ENCODE measurements at regions of chr2 and their contacts with region 1.

Region 1: DNA sequence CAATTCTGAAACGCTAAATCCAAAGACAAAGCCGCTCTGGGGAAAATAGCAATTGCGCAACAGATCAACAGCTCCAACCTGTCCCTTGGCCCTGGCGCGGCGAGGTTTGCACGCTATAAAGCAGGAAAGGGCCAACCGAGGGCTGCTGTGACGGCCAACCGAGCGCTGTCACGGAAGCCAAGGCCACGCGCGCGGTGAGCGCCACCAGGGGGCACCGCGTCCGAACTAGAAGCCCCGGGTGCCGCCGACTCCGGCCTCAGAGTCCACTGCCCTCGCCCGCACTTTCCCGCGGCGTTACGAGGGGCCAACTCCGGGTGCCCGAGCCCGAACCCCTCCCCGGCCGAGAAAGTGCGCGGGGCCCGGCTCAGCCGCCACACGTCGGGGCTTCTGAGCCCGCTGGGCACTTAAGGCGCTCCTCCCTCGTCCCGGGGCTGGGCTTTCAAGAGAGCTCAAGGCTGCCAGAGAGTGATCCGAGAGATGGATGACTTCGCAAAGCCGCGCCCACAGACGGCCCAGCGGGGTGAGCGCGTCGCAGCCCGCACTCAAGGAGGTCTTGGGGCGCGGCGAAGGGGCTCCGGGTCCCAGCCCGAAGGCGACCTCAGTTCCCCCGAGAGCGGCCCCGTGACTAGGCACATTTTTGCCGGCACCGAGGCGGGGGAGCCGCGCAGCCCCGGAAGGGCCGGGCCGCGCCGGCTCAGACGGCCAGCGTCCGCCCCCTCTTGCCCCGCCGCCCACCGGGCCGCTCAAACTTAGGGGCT is 897 bp downstream of the NFE2L2 start:
- DNase-seq: peak; percentile 98
- ATAC-seq: peak; percentile 48
- H3K4me3 ChIP-seq: peak overlapping the region; percentile 67 to 97 (median 92)
- H3K4me3 Mint-ChIP-seq: peak overlapping the region; percentile 98
- H3K27ac ChIP-seq: peak overlapping the region; percentile 99 to 100
- H3K27ac Mint-ChIP-seq: peak overlapping the region; percentile 98
- H3K4me1 ChIP-seq: peaks cover 34% of the 10 kb centered on the region in 2 donors
- H3K4me1 Mint-ChIP-seq: peaks cover 50% of the 10 kb centered on the region
- H3K27me3 ChIP-seq: no peaks in the 10 kb centered on the region
- H3K27me3 Mint-ChIP-seq: no peaks in the 10 kb centered on the region
- CTCF ChIP-seq: peak; percentile 88

Region 2: GRCh38 chr2:176852667-176853066 is 411.0 kb before region 1 on chr2:
- CTCF ChIA-PET with region 1: no interaction called
- POLR2A ChIA-PET with region 1: no interaction called
- intact Hi-C with region 1: no loop called
- DNase-seq: no peak
- ATAC-seq: no peak
- H3K4me3 ChIP-seq: no peak overlapping the region
- H3K4me3 Mint-ChIP-seq: no peak overlapping the region
- H3K27ac ChIP-seq: no peak overlapping the region
- H3K27ac Mint-ChIP-seq: no peak overlapping the region
- H3K4me1 ChIP-seq: no peaks in the 10 kb centered on the region
- H3K4me1 Mint-ChIP-seq: no peaks in the 10 kb centered on the region
- H3K27me3 ChIP-seq: peaks cover 0 to 2% (median 0%) of the 10 kb centered on the region in 4 experiments
- H3K27me3 Mint-ChIP-seq: peaks cover 5% of the 10 kb centered on the region
- CTCF ChIP-seq: no peak

Region 3: GRCh38 chr2:177148477-177149154 is 115.0 kb before region 1 on chr2:
- CTCF ChIA-PET with region 1: interaction called, 29 read pairs
- POLR2A ChIA-PET with region 1: no interaction called
- intact Hi-C with region 1: no loop called
- DNase-seq: peak; percentile 85
- ATAC-seq: peak; percentile 92
- H3K4me3 ChIP-seq: peak overlapping the region; percentile 42 to 94 (median 67)
- H3K4me3 Mint-ChIP-seq: peak overlapping the region; percentile 92
- H3K27ac ChIP-seq: no peak overlapping the region
- H3K27ac Mint-ChIP-seq: peak overlapping the region; percentile 2
- H3K4me1 ChIP-seq: peaks cover 9 to 13% of the 10 kb centered on the region in 2 donors
- H3K4me1 Mint-ChIP-seq: peaks cover 11% of the 10 kb centered on the region
- H3K27me3 ChIP-seq: peaks cover 0 to 13% (median 10%) of the 10 kb centered on the region in 4 experiments
- H3K27me3 Mint-ChIP-seq: peaks cover 36% of the 10 kb centered on the region
- CTCF ChIP-seq: peak; percentile 99

Region 4: GRCh38 chr2:177239932-177240630 is 23.5 kb before region 1 on chr2:
- CTCF ChIA-PET with region 1: interaction called, 46 read pairs
- POLR2A ChIA-PET with region 1: interaction called, 17 read pairs
- intact Hi-C with region 1: loop called (anchors 1 kb)
- DNase-seq: peak; percentile 88
- ATAC-seq: peak; percentile 82
- H3K4me3 ChIP-seq: peak overlapping the region in 1 of 5 experiments; percentile 12
- H3K4me3 Mint-ChIP-seq: peak overlapping the region; percentile 72
- H3K27ac ChIP-seq: peak overlapping the region; percentile 59 to 60
- H3K27ac Mint-ChIP-seq: peak overlapping the region; percentile 82
- H3K4me1 ChIP-seq: peaks cover 48 to 50% of the 10 kb centered on the region in 2 donors
- H3K4me1 Mint-ChIP-seq: peaks cover 71% of the 10 kb centered on the region
- H3K27me3 ChIP-seq: no peaks in the 10 kb centered on the region
- H3K27me3 Mint-ChIP-seq: no peaks in the 10 kb centered on the region
- CTCF ChIP-seq: no peak

Region 5: DNA sequence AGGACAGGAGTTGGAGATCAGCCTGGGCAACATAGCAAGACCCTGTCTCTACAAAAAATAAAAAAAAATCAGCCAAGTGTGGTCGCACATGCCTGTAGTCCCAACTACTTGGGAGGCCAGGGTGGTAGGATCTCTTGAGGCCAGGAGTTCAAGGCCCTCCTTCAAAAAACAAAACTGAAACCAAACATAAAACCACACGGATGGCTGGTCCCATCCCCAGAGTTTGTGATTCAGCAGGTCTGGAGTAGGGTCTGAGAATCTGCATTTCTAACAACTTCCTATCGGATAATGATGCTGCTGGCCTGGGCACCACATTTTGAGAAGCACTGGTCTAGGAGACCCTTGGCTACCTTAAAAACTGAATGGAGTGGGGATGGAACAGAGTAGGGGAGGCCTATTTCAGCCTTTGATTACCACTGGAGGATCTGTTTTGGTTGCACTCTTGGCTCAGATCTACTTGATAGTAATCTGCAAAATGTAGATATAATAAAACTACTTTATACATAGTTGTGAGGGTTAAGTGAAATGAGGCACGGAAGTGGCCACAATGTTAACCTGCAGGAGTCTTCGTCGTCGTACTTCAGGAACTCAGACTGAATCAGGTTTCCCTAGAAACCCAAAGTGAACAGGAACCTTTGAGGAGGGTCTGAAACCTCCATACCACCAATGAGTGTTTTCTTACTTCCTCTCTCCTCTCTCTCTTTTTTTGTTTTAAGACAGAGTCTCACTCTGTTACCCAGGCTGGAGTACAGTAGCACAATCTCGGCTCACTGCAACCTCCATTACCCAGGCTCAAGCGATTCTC is 26.4 kb after region 1 on chr2:
- CTCF ChIA-PET with region 1: interaction called, 126 read pairs
- POLR2A ChIA-PET with region 1: interaction called, 9 read pairs
- intact Hi-C with region 1: no loop called
- DNase-seq: peak; percentile 34
- ATAC-seq: peak; percentile 65
- H3K4me3 ChIP-seq: no peak overlapping the region
- H3K4me3 Mint-ChIP-seq: peak overlapping the region; percentile 5
- H3K27ac ChIP-seq: no peak overlapping the region
- H3K27ac Mint-ChIP-seq: peak overlapping the region; percentile 46
- H3K4me1 ChIP-seq: peaks cover 9 to 13% of the 10 kb centered on the region in 2 donors
- H3K4me1 Mint-ChIP-seq: peaks cover 13% of the 10 kb centered on the region
- H3K27me3 ChIP-seq: no peaks in the 10 kb centered on the region
- H3K27me3 Mint-ChIP-seq: no peaks in the 10 kb centered on the region
- CTCF ChIP-seq: no peak

Region 6: DNA sequence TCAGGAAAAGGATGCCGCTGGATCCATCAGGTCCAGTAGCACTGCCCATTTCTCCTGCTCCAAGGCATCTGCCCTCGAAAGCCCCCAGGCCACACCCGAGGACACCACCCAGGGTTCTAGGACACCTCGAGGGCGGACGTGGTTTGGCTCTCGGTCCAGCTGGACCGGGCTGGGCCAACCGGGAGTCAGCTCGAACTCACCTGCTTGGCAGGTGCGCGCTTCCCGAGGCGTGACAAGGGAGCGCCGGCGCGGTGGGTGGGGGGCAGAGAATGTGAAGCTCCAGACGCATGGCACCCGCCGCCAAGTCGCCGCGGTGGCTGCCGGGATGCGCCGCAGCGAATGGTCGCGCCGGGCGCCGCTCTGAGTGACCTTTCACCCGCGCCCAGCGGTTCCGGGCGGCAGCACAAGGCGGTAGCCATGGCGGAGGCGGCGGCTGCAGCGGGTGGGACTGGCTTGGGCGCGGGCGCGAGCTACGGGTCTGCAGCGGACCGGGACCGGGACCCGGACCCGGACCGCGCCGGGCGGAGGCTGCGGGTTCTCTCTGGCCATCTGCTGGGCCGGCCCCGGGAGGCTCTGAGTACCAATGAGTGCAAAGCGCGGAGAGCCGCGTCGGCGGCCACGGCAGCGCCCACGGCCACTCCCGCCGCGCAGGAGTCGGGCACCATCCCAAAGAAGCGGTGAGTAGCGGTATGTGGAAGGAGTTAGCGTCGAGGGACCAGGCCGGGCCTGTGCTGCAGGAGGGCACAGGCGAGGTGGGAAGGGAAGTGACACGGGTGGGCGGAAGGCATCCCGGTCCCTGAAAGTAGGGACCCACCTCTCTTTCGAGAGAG is 129.0 kb after region 1 on chr2 and contains the start of gene AGPS:
- CTCF ChIA-PET with region 1: interaction called, 20 read pairs
- POLR2A ChIA-PET with region 1: interaction called, 5 read pairs
- intact Hi-C with region 1: loop called (anchors 5 kb)
- DNase-seq: peak; percentile 66
- ATAC-seq: peak; percentile 91
- H3K4me3 ChIP-seq: peak within 1 kb of the TSS; percentile 70 to 83 (median 77)
- H3K4me3 Mint-ChIP-seq: peak within 1 kb of the TSS; percentile 91
- H3K27ac ChIP-seq: peak within 1 kb of the TSS in 1 of 2 donors; percentile 47
- H3K27ac Mint-ChIP-seq: peak within 1 kb of the TSS; percentile 87
- H3K4me1 ChIP-seq: peaks cover 19 to 28% of the 10 kb centered on the region in 2 donors
- H3K4me1 Mint-ChIP-seq: peaks cover 42% of the 10 kb centered on the region
- H3K27me3 ChIP-seq: no peaks in the 10 kb centered on the region
- H3K27me3 Mint-ChIP-seq: no peaks in the 10 kb centered on the region
- CTCF ChIP-seq: no peak
- total RNA-seq, gene AGPS: 23.2 and 25.5 TPM in 2 replicates

Region 7: GRCh38 chr2:177618255-177619253 is 354.9 kb after region 1 on chr2:
- CTCF ChIA-PET with region 1: no interaction called
- POLR2A ChIA-PET with region 1: no interaction called
- intact Hi-C with region 1: loop called (anchors 2 kb)
- DNase-seq: peak; percentile 97
- ATAC-seq: peak; percentile 88
- H3K4me3 ChIP-seq: peak overlapping the region; percentile 62 to 98 (median 93)
- H3K4me3 Mint-ChIP-seq: peak overlapping the region; percentile 98
- H3K27ac ChIP-seq: peak overlapping the region; percentile 91 to 100
- H3K27ac Mint-ChIP-seq: peak overlapping the region; percentile 100
- H3K4me1 ChIP-seq: peaks cover 9 to 10% of the 10 kb centered on the region in 2 donors
- H3K4me1 Mint-ChIP-seq: peaks cover 11% of the 10 kb centered on the region
- H3K27me3 ChIP-seq: peaks cover 0 to 2% (median 0%) of the 10 kb centered on the region in 4 experiments
- H3K27me3 Mint-ChIP-seq: no peaks in the 10 kb centered on the region
- CTCF ChIP-seq: no peak

Measured in B cell (primary cell).